ENCODE measurements at regions of chr5 and their contacts with region 1.

Region 1: DNA sequence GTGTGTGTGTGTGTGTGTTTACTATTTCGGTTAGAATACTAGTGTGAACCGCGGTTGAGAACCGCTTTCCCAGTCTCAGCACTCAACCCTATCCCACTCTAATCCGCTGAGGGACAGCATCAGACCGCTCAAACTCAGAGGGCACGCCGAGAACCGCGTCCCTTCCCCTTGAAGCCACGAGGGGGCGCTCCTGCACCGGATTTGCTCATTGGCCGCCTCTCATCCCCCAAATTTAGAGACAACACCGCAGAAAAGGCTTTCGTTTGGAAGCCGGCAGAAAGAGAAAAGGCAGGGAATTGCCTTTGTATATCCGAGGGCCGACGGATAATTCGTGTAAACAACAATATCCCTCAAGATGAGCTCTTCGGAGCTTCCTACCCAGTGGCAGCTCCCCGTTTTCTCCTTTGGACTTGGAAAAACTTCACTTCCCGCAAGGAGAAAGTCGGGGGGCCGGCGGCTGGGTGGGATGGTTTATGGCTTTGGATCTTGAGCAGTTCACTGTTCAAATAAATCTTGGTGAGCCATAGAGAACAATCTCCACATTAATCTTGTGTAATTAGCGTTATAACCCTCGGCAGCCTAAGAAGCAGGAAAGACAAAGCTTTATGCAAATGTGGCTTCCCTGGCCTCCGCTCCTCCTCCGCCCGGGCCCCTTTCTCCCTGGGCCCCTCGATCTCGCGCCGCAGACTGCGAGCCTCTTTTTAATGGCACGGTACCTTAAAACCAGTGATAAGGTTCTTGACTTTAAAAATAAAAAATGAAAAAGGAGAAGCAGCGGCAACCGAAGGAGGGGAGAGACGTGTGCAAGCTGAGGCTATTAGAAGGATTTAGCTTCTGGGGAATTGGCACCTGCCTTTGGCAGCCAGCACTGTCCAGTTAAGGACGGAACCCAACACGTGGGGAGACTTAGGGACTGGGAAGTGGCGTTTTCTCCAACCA is 296.8 kb downstream of the PARP8 start:
- DNase-seq: peak; percentile 72
- ATAC-seq: peak; percentile 85

Region 2: DNA sequence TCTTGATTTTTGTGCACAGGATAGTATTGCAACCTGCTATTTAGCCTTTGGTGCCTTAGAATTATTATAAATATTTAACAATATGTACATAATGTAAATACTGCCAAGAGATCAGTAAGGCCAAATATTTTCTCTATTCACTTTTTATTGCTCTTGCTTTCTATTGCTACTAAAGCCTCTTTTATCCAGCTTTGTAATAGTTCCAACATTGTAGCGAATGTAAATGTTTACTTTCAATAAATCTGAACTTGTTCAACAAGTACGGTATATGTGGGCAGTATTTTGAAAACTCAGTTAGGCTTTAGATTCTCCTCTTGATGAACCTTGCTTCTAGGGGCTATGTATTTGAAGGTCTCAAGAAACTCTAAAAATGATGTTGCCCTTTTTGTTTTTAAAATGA is 116.9 kb before region 1 on chr5:
- intact Hi-C with region 1: no loop called
- DNase-seq: no peak
- ATAC-seq: no peak

Region 3: GRCh38 chr5:50995272-50995942 is 32.2 kb after region 1 on chr5:
- intact Hi-C with region 1: no loop called
- DNase-seq: no peak
- ATAC-seq: no peak

Region 4: GRCh38 chr5:52007230-52007858 is 1044.1 kb after region 1 on chr5:
- intact Hi-C with region 1: loop called (anchors 10 kb)
- DNase-seq: no peak
- ATAC-seq: no peak

Region 5: DNA sequence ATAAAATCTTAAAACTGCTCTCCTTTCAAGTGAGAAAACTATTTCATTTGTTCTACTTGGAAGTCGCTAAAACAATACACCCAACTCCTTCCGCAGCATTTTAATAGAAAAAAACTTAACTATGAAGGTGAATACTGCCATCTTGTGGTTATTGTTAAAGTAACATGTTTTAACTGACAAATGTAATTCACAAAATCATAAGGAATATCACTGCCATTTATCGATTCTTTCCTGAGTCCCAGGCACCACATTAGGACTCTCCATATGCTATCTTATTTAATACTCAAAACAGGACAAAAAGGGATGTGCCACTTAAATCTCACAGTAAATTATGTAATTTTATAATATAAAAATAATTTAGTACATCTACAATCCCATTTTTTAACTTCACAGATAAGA is 1694.0 kb after region 1 on chr5:
- intact Hi-C with region 1: loop called (anchors 5 kb)
- DNase-seq: no peak
- ATAC-seq: no peak